ENCODE measurements at regions of chr5 and their contacts with region 1.

Region 1: DNA sequence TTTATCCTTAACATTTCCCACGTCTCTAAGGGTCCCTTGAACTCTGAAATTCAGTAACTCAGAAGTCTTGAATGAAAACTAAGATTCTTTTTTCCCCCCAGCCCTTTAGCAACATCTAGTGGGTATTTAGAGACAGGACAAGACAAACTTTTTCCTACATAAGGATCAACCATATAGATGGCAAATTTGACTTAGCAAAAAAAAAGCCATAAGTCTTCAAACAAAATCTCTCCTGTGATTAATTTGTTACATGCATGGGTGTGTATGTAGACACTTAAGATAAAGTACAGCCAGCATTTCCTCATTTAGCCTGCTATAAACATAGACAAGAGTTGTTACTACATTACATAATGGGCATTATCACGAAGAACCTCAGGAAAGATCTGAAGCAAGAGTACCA is 29.1 kb upstream of the ANKRD31 start:
- DNase-seq: peak; percentile 25
- ATAC-seq: no peak; the same call in none of the 2 replicates
- H3K4me3 ChIP-seq: no peak overlapping the region
- H3K27ac ChIP-seq: no peak overlapping the region
- H3K4me1 ChIP-seq: no peaks in the 10 kb centered on the region
- H3K27me3 ChIP-seq: peaks cover 3% of the 10 kb centered on the region; the same call in 1 of the 2 replicates
- CTCF ChIP-seq: peak; percentile 77; the same call in 1 of the 2 replicates

Region 2: DNA sequence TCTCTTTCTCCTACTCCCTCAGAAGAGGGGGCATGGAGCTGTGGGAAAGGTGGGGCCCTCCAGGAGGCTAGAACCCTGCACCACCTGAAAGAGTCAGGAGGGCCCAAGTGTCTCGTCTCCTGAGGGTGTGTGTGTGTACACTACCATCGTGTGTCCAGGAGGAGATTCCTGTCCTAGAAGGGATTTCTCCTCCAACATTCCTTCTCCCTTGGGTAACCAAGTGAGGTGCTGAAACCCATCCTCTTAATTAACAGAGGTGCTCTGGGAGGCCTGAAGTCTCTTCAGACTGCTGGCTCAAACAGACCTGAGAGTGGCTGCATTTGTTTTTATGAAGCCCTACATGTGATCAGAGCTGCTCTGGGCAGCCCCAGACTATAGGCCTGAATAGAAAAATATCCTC is 338.4 kb before region 1 on chr5:
- CTCF ChIA-PET with region 1: no interaction called
- POLR2A ChIA-PET with region 1: no interaction called
- in situ Hi-C with region 1: no loop called
- intact Hi-C with region 1: loop called (anchors 10 kb)
- DNase-seq: no peak
- ATAC-seq: no peak
- H3K4me3 ChIP-seq: no peak overlapping the region
- H3K27ac ChIP-seq: no peak overlapping the region
- H3K4me1 ChIP-seq: no peaks in the 10 kb centered on the region
- H3K27me3 ChIP-seq: no peaks in the 10 kb centered on the region; the same call in 1 of the 2 replicates
- CTCF ChIP-seq: no peak

Measured in Panc1 (cell line).